Activated CD8-positive, alpha-beta T cell treated with anti-CD3 and anti-CD28 coated beads for 36 hours (primary cell): ENCODE measurements at regions of chr2 and their contacts with region 1.

Region 1: DNA sequence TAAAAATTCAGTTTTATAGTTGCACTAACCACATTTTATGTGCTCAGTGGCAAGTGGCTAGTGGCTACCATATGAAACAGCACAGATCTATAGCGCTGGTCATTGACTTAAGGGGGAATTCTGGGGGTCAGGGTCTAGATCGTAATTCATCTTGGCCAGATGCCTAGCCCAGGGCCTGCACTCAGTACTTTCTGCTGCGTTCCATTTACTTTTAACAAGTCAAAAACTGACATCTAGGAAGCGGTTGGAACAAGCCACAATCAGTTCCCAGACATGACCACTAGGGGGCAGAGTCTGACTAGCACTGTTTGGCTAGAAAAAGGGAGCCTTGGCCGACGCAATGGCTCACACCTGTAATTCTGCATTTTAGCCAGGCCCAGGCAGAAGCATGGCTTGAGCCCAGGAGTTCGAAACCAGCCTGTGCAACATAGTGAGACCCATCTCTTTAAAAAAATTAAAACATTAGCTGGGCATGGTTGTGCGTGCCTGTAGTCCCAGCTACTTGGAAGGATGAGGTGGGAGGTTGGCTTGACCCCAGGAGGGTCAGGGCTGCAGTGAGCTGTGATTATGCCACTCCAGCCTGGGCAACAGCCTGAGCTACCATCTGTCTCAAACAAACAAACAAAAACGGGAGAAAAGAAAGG is 9.0 kb upstream of the TMBIM1 start:
- DNase-seq: peak; percentile 95
- ATAC-seq: peak; percentile 97
- H3K4me3 Mint-ChIP-seq: no peak overlapping the region
- H3K27ac Mint-ChIP-seq: no peak overlapping the region
- H3K4me1 Mint-ChIP-seq: peaks cover 5% of the 10 kb centered on the region
- H3K27me3 Mint-ChIP-seq: no peaks in the 10 kb centered on the region
- CTCF ChIP-seq: peak; percentile 90

Region 2: DNA sequence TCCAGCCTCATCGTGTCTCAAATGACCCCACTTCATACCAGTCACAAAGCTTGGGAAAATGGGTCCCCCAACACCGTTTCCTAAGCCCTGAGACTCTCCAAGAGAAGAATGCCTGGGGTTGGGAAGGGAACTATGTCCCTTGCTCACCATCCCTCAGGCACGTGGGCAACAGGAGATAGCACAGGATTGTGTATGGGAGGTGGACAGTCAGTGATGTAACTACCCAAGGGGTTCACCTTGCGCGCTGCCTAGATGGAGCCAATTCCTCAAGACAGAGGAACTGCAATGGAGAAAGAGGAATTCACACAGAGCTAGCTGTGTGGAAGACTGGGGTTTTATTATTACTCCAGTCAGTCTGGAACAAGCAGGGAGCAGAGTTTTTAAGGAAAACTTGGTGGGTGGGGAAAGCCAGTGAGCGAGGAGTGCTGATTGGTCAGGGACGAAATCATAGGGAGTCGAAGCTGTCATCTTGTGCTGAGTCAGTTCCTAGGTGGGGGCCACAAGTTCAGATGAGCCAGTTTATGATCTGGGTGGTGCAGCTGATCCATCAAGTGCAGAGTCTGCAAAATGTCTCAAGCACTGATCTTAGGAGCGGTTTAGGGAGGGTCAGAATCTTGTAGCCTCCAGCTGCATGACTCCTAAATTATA is 120.7 kb before region 1 on chr2:
- CTCF ChIA-PET with region 1: no interaction called
- POLR2A ChIA-PET with region 1: no interaction called
- intact Hi-C with region 1: no loop called
- DNase-seq: no peak
- ATAC-seq: no peak
- H3K4me3 Mint-ChIP-seq: no peak overlapping the region
- H3K27ac Mint-ChIP-seq: no peak overlapping the region
- H3K4me1 Mint-ChIP-seq: no peaks in the 10 kb centered on the region
- H3K27me3 Mint-ChIP-seq: no peaks in the 10 kb centered on the region
- CTCF ChIP-seq: no peak

Region 3: DNA sequence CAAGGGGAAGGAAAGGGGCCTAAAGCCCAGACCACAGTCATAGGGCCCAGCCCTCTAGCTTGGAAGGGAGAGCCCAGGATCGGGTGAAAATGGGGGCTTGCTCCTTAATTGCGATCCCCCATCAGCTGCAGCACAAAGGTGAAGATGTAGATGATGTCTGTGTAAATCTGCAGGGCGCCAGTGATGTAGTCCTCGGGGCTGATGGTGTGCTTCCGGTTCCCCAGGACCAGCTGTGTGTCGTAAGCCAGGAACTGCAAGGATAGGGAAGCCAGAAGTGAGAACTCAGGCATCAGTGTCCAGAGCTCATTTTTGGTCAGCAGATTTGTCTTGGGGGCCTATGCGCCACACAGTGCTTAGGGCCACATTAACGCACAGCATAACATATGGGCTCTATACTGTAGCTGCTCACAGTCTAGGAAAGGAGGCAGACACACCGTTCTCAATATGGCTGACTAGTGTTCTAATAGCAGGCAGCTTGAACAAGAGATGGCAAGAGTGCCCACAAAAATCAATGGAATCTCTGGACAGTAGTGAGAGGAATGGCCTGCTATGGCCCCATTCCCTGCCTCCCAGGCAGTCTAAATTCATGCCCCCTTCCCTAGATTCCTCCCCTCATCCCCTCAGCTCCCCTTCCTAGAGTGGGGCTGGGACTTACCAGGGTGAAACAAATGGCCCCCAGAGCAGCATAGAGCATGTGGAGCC is 25.8 kb before region 1 on chr2:
- CTCF ChIA-PET with region 1: interaction called, 125 read pairs
- POLR2A ChIA-PET with region 1: no interaction called
- intact Hi-C with region 1: no loop called
- DNase-seq: no peak
- ATAC-seq: no peak
- H3K4me3 Mint-ChIP-seq: no peak overlapping the region
- H3K27ac Mint-ChIP-seq: peak overlapping the region; percentile 39
- H3K4me1 Mint-ChIP-seq: peaks cover 21% of the 10 kb centered on the region
- H3K27me3 Mint-ChIP-seq: no peaks in the 10 kb centered on the region
- CTCF ChIP-seq: no peak